Naive thymus-derived CD4-positive, alpha-beta T cell (primary cell): ENCODE measurements at regions of chr1 and their contacts with region 1.

Region 1: DNA sequence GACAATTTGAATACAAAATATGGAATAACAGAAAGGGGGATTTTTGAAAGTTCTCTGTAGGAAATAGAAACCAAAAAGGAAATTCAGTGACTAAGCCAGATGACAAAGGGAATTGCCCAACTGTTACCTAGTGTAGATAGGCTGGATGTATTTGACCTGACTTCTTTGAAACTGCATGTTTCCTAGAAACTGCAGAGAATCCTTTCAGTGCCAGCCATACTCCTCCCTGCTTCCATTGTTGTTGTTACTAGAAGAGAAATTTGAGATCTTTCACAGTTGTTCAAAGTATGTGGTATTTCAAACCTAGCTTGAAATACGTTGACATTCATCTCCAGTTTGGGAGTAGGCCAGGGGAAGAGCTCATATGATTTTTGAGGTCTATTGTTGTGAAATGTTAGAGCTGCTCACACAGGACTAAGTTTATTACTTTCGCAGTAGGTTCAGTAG is 1.8 kb upstream of the GBP5 start:
- DNase-seq: peak in 2 of 9 donors; percentile 21 to 55
- ATAC-seq: peak; percentile 63
- H3K4me3 ChIP-seq: peak overlapping the region; percentile 40
- H3K4me3 Mint-ChIP-seq: peak overlapping the region; percentile 73 to 90 (median 80)
- H3K27ac ChIP-seq: peak overlapping the region; percentile 60
- H3K27ac Mint-ChIP-seq: peak overlapping the region; percentile 90 to 98 (median 95)
- H3K4me1 ChIP-seq: peaks cover 48 to 49% of the 10 kb centered on the region in 2 donors
- H3K4me1 Mint-ChIP-seq: peaks cover 44 to 92% (median 78%) of the 10 kb centered on the region in 7 donors
- H3K27me3 ChIP-seq: no peaks in the 10 kb centered on the region
- H3K27me3 Mint-ChIP-seq: no peaks in the 10 kb centered on the region

Region 2: DNA sequence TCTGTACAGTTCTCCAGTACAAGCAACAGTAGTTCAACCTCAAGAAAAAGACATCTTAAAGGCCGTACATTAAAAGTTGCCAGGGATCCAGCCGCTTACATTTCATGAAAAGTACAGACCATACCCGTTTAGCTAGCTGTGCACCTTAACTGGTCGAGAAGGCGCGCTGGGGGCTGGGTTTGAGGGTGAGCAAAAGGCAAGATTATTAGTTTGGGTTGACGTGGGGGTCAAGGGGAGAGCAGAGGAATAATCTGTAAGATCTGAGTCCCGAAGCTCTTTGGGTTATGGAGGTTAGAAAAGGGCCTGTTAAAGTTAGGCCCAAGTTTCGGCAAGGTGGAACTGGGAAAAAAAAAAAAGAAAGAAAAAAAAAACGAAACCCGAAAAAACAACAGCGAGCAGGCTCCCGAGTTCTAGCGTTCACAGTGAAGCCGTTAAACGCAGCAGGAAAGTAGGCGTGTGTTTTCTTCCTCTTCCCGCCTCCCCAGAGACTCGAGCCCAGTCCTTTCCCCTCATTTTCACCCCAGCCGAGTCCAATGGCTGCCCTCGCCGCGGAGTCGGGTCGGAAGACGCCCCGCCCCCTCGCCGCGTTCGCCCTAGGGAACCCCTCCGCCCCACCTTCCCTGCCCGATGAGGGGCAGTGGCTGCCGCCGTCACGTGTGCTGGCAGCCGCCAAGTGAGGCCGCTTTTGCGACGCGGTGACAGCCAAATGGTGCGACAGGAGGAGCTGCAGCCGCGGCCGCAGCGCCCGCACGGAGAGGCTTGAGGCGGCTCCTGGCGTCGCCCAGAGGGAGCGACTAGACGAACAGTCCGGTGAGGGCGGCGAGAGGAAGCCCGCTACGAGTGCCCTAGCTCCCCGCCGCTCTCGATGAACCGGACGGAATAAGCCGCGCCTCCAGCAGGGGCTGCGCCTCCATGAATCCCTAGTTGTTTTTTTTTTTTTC is 590.6 kb before region 1 on chr1 and contains the start of gene PKN2:
- CTCF ChIA-PET with region 1: no interaction called
- POLR2A ChIA-PET with region 1: no interaction called
- intact Hi-C with region 1: loop called in 1 of 2 experiments (anchors 10 kb)
- DNase-seq: peak; percentile 94 to 98 (median 97)
- ATAC-seq: peak; percentile 96
- H3K4me3 ChIP-seq: peak within 1 kb of the TSS; percentile 91
- H3K4me3 Mint-ChIP-seq: peak within 1 kb of the TSS; percentile 89 to 99 (median 97)
- H3K27ac ChIP-seq: peak within 1 kb of the TSS; percentile 89
- H3K27ac Mint-ChIP-seq: peak within 1 kb of the TSS; percentile 96 to 100 (median 97)
- H3K4me1 ChIP-seq: peaks cover 18 to 19% of the 10 kb centered on the region in 2 donors
- H3K4me1 Mint-ChIP-seq: peaks cover 18 to 53% (median 36%) of the 10 kb centered on the region in 7 donors
- H3K27me3 ChIP-seq: no peaks in the 10 kb centered on the region
- H3K27me3 Mint-ChIP-seq: peaks cover 0 to 12% (median 0%) of the 10 kb centered on the region in 5 donors
- total RNA-seq, gene PKN2: 32.1 to 53.8 (median 46.9) TPM

Region 3: DNA sequence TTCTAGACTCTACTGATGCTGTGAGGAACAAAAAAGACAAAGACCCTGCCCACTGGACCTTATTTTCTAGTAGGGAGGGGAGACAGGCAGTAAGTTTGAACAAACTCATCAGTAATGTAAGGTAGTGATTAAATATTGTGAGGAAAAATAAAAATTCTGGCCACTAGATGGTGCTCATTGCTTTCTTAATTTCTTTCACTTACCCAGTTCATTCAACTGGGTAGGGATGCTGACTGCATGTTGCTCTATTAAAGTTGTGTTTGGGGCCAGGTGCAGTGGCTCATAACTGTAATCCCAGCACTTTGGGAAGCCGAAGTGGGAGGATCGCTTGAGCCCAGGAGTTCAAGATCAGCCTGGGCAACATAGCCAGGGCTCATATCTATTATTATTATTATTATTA is 275.7 kb before region 1 on chr1:
- CTCF ChIA-PET with region 1: interaction called, 38 read pairs
- POLR2A ChIA-PET with region 1: interaction called, 10 read pairs
- intact Hi-C with region 1: loop called in 1 of 2 experiments (anchors 1 kb)
- DNase-seq: peak in 7 of 9 donors; percentile 59 to 81 (median 76)
- ATAC-seq: peak; percentile 90
- H3K4me3 ChIP-seq: no peak overlapping the region
- H3K4me3 Mint-ChIP-seq: no peak overlapping the region
- H3K27ac ChIP-seq: no peak overlapping the region
- H3K27ac Mint-ChIP-seq: peak overlapping the region in 1 of 9 donors; percentile 68
- H3K4me1 ChIP-seq: peaks cover 12 to 19% of the 10 kb centered on the region in 2 donors
- H3K4me1 Mint-ChIP-seq: peaks cover 17 to 49% (median 34%) of the 10 kb centered on the region in 7 donors
- H3K27me3 ChIP-seq: no peaks in the 10 kb centered on the region
- H3K27me3 Mint-ChIP-seq: peaks cover 0 to 2% (median 0%) of the 10 kb centered on the region in 5 donors

Region 4: GRCh38 chr1:89125913-89126580 is 148.4 kb before region 1 on chr1 and contains the start of gene GBP2:
- CTCF ChIA-PET with region 1: interaction called, 14 read pairs
- POLR2A ChIA-PET with region 1: interaction called, 42 read pairs
- intact Hi-C with region 1: loop called (anchors 1 kb)
- DNase-seq: peak in 7 of 9 donors; percentile 35 to 72 (median 42)
- ATAC-seq: peak; percentile 82
- H3K4me3 ChIP-seq: peak within 1 kb of the TSS; percentile 84
- H3K4me3 Mint-ChIP-seq: peak within 1 kb of the TSS; percentile 88 to 100 (median 98)
- H3K27ac ChIP-seq: peak within 1 kb of the TSS; percentile 76
- H3K27ac Mint-ChIP-seq: peak within 1 kb of the TSS; percentile 94 to 100 (median 99)
- H3K4me1 ChIP-seq: peaks cover 30 to 32% of the 10 kb centered on the region in 2 donors
- H3K4me1 Mint-ChIP-seq: peaks cover 39 to 75% (median 63%) of the 10 kb centered on the region in 7 donors
- H3K27me3 ChIP-seq: no peaks in the 10 kb centered on the region
- H3K27me3 Mint-ChIP-seq: peaks cover 0 to 2% (median 0%) of the 10 kb centered on the region in 5 donors
- total RNA-seq, gene GBP2: 74.0 to 200 (median 185) TPM

Region 5: GRCh38 chr1:89298461-89298860 is 24.0 kb after region 1 on chr1:
- CTCF ChIA-PET with region 1: no interaction called
- POLR2A ChIA-PET with region 1: interaction called, 7 read pairs
- intact Hi-C with region 1: loop called in 1 of 2 experiments (anchors 1 kb)
- DNase-seq: no peak
- ATAC-seq: no peak
- H3K4me3 ChIP-seq: no peak overlapping the region
- H3K4me3 Mint-ChIP-seq: peak overlapping the region in 1 of 10 donors; percentile 57
- H3K27ac ChIP-seq: no peak overlapping the region
- H3K27ac Mint-ChIP-seq: peak overlapping the region in 4 of 9 donors; percentile 6 to 75 (median 59)
- H3K4me1 ChIP-seq: peaks cover 6 to 19% of the 10 kb centered on the region in 2 donors
- H3K4me1 Mint-ChIP-seq: peaks cover 16 to 71% (median 44%) of the 10 kb centered on the region in 7 donors
- H3K27me3 ChIP-seq: no peaks in the 10 kb centered on the region
- H3K27me3 Mint-ChIP-seq: no peaks in the 10 kb centered on the region

Region 6: GRCh38 chr1:89524369-89525168 is 250.1 kb after region 1 on chr1 and contains the start of gene LRRC8B:
- CTCF ChIA-PET with region 1: no interaction called
- POLR2A ChIA-PET with region 1: no interaction called
- intact Hi-C with region 1: loop called in 1 of 2 experiments (anchors 10 kb)
- DNase-seq: peak; percentile 80 to 91 (median 86)
- ATAC-seq: peak; percentile 94
- H3K4me3 ChIP-seq: peak within 1 kb of the TSS; percentile 93
- H3K4me3 Mint-ChIP-seq: peak within 1 kb of the TSS in 1 of 10 donors; percentile 76
- H3K27ac ChIP-seq: peak within 1 kb of the TSS; percentile 92
- H3K27ac Mint-ChIP-seq: peak within 1 kb of the TSS in 8 of 9 donors; percentile 89 to 97 (median 94)
- H3K4me1 ChIP-seq: peaks cover 7 to 34% of the 10 kb centered on the region in 2 donors
- H3K4me1 Mint-ChIP-seq: peaks cover 11 to 31% (median 21%) of the 10 kb centered on the region in 7 donors
- H3K27me3 ChIP-seq: no peaks in the 10 kb centered on the region
- H3K27me3 Mint-ChIP-seq: no peaks in the 10 kb centered on the region
- total RNA-seq, gene LRRC8B: 8.8 to 23.0 (median 17.1) TPM